ENCODE measurements at regions of chr3 and their contacts with region 1.

Region 1: GRCh38 chr3:4986782-4987537 is 7.7 kb downstream of the BHLHE40 start:
- DNase-seq: peak; percentile 62 to 79 (median 70)
- H3K4me3 ChIP-seq: peak overlapping the region; percentile 44 to 65
- H3K4me3 Mint-ChIP-seq: peak overlapping the region; percentile 86 to 93 (median 90)
- H3K27ac ChIP-seq: peak overlapping the region; percentile 59
- H3K27ac Mint-ChIP-seq: peak overlapping the region; percentile 95 to 98 (median 97)
- H3K4me1 ChIP-seq: peaks cover 58% of the 10 kb centered on the region
- H3K4me1 Mint-ChIP-seq: peaks cover 34 to 50% (median 43%) of the 10 kb centered on the region in 4 donors
- H3K27me3 ChIP-seq: no peaks in the 10 kb centered on the region
- H3K27me3 Mint-ChIP-seq: no peaks in the 10 kb centered on the region

Region 2: GRCh38 chr3:4722103-4722502 is 264.9 kb before region 1 on chr3:
- CTCF ChIA-PET with region 1: interaction called, 13 read pairs
- POLR2A ChIA-PET with region 1: interaction called, 4 read pairs
- intact Hi-C with region 1: no loop called
- DNase-seq: peak in 4 of 5 donors; percentile 23 to 47 (median 28)
- H3K4me3 ChIP-seq: no peak overlapping the region
- H3K4me3 Mint-ChIP-seq: no peak overlapping the region
- H3K27ac ChIP-seq: no peak overlapping the region
- H3K27ac Mint-ChIP-seq: peak overlapping the region in 5 of 7 donors; percentile 39 to 86 (median 65)
- H3K4me1 ChIP-seq: peaks cover 12% of the 10 kb centered on the region
- H3K4me1 Mint-ChIP-seq: peaks cover 16 to 23% (median 18%) of the 10 kb centered on the region in 4 donors
- H3K27me3 ChIP-seq: no peaks in the 10 kb centered on the region
- H3K27me3 Mint-ChIP-seq: no peaks in the 10 kb centered on the region

Region 3: DNA sequence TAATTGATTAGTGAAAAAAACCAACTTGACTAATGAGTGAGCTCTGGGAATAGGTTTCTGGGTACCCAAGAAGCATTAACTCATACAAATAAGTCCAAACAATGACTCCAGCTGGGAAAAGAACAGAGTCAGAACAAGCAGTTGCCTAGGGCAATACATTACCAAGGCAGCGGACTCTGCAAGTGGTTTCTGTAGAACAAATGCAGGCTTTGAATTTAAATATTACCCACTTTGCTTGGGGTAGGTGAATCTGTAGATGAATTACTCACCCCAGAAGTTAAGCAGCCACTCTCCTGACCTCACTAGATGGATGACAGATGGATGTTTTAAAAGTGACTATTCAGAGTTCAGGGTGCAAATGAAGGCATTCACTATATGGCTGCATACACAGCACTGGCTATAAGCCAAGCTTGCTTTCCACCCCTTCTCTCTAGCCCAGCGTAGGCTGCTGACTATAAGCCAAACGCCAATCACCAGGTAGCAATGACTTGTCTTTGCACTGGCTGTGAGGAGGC is 80.8 kb before region 1 on chr3:
- CTCF ChIA-PET with region 1: interaction called, 3 read pairs
- POLR2A ChIA-PET with region 1: interaction called, 16 read pairs
- intact Hi-C with region 1: no loop called
- DNase-seq: peak in 1 of 5 donors; percentile 46
- H3K4me3 ChIP-seq: no peak overlapping the region
- H3K4me3 Mint-ChIP-seq: peak overlapping the region in 3 of 8 donors; percentile 10 to 72 (median 36)
- H3K27ac ChIP-seq: peak overlapping the region; percentile 22
- H3K27ac Mint-ChIP-seq: peak overlapping the region; percentile 19 to 92 (median 76)
- H3K4me1 ChIP-seq: peaks cover 57% of the 10 kb centered on the region
- H3K4me1 Mint-ChIP-seq: peaks cover 39 to 73% (median 54%) of the 10 kb centered on the region in 4 donors
- H3K27me3 ChIP-seq: no peaks in the 10 kb centered on the region
- H3K27me3 Mint-ChIP-seq: no peaks in the 10 kb centered on the region

Region 4: DNA sequence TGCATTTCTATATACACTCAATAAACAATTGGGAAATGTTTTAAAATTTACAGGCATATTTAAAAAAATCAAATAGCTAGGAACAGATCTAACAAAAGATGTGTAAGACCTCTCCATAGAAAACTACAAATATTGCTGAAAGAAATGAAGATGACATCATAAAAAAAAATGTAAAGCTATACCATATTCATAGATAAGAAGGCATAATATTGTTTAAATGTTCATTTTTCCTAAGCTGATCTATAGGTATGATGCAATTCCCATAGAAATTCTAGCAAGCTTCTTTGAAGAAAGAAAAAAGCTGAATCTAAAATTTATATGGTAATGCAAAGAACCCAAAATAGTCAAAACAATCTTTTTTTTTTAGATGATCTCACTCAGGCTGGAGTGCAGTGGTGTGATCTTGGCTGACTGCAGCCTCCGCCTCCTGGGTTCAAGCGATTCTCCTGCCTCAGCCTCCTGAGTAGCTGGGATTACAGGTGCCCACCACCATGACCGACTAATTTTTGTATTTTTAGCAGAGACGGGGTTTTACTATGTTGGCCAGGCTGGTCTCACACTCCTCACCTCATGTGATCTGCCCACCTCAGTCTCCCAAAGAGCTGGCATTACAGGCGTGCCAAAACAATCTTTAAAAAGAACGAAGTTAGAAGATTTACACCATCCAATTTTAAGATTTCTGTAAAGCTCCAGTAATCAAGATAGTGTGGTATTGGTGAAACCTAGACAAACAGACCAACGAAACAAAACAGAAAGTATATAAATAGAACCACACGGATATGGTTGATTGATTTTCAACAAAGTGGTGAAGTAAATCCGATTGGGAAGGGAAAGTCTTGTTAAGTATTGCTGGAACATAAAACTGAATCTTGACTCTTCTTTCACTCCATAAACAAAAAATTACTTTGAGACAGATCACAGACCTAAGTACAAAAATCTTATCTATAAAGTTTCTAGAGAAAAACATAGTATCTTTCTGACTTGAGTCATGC is 14.0 kb before region 1 on chr3:
- CTCF ChIA-PET with region 1: interaction called, 8 read pairs
- POLR2A ChIA-PET with region 1: interaction called, 42 read pairs
- intact Hi-C with region 1: no loop called
- DNase-seq: no peak
- H3K4me3 ChIP-seq: no peak overlapping the region
- H3K4me3 Mint-ChIP-seq: peak overlapping the region in 5 of 8 donors; percentile 2 to 50 (median 35)
- H3K27ac ChIP-seq: no peak overlapping the region
- H3K27ac Mint-ChIP-seq: peak overlapping the region; percentile 11 to 87 (median 73)
- H3K4me1 ChIP-seq: peaks cover 20% of the 10 kb centered on the region
- H3K4me1 Mint-ChIP-seq: peaks cover 12 to 38% (median 26%) of the 10 kb centered on the region in 4 donors
- H3K27me3 ChIP-seq: no peaks in the 10 kb centered on the region
- H3K27me3 Mint-ChIP-seq: no peaks in the 10 kb centered on the region

Region 5: GRCh38 chr3:5002174-5002870 is 15.4 kb after region 1 on chr3:
- CTCF ChIA-PET with region 1: interaction called, 9 read pairs
- POLR2A ChIA-PET with region 1: interaction called, 580 read pairs
- intact Hi-C with region 1: no loop called
- DNase-seq: peak; percentile 41 to 88 (median 48)
- H3K4me3 ChIP-seq: no peak overlapping the region
- H3K4me3 Mint-ChIP-seq: peak overlapping the region in 4 of 8 donors; percentile 22 to 53 (median 51)
- H3K27ac ChIP-seq: no peak overlapping the region
- H3K27ac Mint-ChIP-seq: peak overlapping the region in 6 of 7 donors; percentile 61 to 87 (median 83)
- H3K4me1 ChIP-seq: peaks cover 37% of the 10 kb centered on the region
- H3K4me1 Mint-ChIP-seq: peaks cover 19 to 56% (median 28%) of the 10 kb centered on the region in 4 donors
- H3K27me3 ChIP-seq: no peaks in the 10 kb centered on the region
- H3K27me3 Mint-ChIP-seq: no peaks in the 10 kb centered on the region

Region 6: DNA sequence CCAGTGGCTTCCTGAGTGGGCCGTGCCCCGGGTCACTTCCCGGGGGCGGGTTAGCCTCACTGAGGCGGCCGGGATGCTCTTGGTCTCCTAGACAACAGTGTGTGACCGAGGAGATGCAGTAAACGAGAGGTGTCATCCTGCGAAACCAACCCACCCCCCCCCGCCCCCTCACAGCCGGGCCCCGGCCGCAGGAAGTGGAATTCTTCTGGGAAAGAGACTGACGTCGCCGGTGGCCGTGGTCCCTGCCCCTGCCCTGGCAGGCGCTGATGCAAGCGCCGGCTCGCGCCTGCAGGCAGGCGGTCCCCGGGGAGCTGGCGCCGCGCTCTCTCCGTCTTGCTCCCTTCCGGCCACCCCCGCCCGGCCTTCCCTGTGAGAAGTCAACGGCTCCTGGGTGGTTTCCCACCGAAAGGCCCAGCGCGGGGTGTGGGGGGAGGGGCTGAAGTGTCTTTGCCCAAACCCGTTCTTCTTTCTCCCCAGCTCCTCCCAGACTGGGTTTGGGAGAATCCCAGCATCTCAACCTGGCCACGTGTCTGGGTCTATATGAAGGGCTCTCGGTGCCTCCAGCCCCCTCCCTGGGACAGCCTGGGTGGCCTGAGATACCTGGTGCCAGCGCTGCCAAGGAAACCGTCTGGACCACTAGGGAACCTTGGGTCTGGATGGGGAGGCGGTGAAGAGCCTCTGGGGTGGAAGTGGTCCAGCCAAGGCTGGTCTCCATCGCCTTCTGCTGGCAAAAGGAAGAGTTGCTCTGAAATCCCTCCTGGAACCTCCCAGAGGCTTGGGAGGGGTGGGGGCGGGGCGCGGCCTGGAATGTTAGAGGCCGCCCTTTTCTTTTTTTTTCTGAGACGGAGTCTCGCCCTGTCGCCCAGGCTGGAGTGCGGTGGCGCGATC is 39.6 kb after region 1 on chr3:
- CTCF ChIA-PET with region 1: interaction called, 251 read pairs
- POLR2A ChIA-PET with region 1: interaction called, 580 read pairs
- intact Hi-C with region 1: loop called (anchors 1 kb)
- DNase-seq: peak; percentile 54 to 77 (median 57)
- H3K4me3 ChIP-seq: peak overlapping the region in 1 of 2 donors; percentile 71
- H3K4me3 Mint-ChIP-seq: peak overlapping the region; percentile 85 to 93 (median 87)
- H3K27ac ChIP-seq: peak overlapping the region; percentile 50
- H3K27ac Mint-ChIP-seq: peak overlapping the region; percentile 81 to 97 (median 93)
- H3K4me1 ChIP-seq: peaks cover 13% of the 10 kb centered on the region
- H3K4me1 Mint-ChIP-seq: peaks cover 15 to 35% (median 23%) of the 10 kb centered on the region in 4 donors
- H3K27me3 ChIP-seq: no peaks in the 10 kb centered on the region
- H3K27me3 Mint-ChIP-seq: no peaks in the 10 kb centered on the region